ENCODE measurements at regions of chr3 and their contacts with region 1.

Region 1: GRCh38 chr3:143998266-143998665 is 26.6 kb downstream of the DIPK2A start:
- H3K4me3 Mint-ChIP-seq: no peak overlapping the region
- H3K27ac Mint-ChIP-seq: no peak overlapping the region
- H3K4me1 Mint-ChIP-seq: peaks cover 29% of the 10 kb centered on the region
- H3K27me3 Mint-ChIP-seq: peaks cover 12% of the 10 kb centered on the region

Region 2: GRCh38 chr3:144028798-144029411 is 30.6 kb after region 1 on chr3:
- intact Hi-C with region 1: loop called (anchors 2 kb)
- H3K4me3 Mint-ChIP-seq: no peak overlapping the region
- H3K27ac Mint-ChIP-seq: peak overlapping the region; percentile 43
- H3K4me1 Mint-ChIP-seq: peaks cover 24% of the 10 kb centered on the region
- H3K27me3 Mint-ChIP-seq: peaks cover 11% of the 10 kb centered on the region

Measured in dendritic cell treated with granulocyte-macrophage colony-stimulating factor and Interleukin-4, amounts not matched to agents 40 ng/mL and 50 ng/mL, for 4 days (primary cell).